ENCODE measurements at regions of chr17 and their contacts with region 1.

Region 1: DNA sequence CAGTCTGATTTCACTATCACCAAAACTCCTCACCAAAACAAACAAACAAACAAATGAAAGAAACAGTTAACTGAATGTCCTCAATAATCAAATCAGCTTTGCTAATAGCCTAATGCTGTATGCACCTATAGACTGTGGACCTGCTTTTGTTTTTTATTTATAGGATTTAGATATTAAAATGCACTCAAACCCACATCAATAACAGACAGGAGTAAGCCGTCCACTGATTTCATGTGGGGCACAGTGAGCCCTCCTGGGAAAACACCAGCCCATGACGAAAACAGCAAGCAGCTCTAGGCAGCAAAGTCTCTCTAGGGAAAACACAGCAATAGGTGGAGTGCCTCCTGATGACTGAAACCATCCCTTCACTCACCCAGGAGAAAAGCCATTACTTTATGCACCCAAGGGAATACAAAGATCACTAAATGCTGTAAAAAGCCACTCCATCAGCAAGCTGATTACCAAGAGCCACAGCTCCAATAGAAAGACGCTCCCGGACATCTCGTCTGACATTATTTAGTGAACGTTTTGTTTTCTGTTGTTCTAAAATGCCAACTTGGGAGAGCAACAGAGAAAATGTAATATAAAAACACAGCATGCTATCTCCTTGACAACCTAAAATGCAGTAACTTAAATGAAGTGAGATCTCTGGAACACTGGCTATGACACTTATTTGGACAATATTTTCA is 47.8 kb downstream of the ANKFY1 start:
- DNase-seq: no peak
- H3K4me3 ChIP-seq: no peak overlapping the region
- H3K27ac ChIP-seq: peak overlapping the region; percentile 8 to 95
- H3K4me1 ChIP-seq: peaks cover 2 to 4% of the 10 kb centered on the region in 2 donors
- H3K27me3 ChIP-seq: no peaks in the 10 kb centered on the region
- CTCF ChIP-seq: no peak
- POLR2A ChIP-seq: no peak

Region 2: DNA sequence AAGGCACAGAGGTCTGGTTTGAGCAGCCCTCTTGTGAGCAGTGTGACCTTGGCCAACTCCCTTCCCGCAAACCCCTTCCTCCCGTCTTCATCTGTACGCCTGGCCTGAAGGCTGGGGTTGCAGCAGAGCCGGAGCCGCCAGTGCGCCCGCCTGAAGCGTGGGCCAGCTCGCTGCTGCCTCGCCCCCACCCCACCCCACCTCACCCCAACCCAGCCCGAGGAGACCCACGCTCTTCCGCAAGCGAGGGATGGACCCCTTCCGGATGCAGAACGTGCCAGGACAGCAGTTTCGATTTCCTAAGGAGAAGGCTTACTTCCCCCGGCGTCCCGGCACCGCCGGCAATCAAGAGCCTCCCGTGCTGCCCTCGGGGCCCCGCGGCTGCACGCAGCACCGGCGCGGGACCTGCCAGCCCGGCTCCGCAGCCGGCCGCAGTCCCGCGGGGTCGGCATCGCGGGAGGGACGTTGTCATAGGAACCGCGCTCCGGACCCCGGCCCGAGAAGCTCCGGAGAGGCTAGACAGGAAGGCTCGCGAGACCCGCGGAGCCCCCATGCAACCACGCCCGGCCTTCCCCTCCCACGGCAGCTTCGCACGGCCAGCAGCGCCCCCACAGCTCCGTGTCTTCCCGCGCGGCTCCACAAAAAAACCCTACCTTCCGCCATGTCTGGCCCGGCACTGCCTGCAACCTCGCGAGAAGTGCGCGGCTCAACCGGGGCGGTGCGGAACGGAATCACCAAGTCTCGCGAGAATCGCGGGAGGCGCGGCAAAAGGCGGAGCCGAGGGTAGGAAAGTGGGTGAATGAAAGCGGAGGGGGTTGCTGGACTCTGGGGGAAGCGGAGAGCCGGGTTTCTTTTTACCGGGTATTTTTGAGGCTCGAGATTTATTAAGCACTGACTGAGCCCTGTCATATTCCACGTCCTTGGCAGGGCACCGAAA is 47.5 kb after region 1 on chr17 and contains the start of gene ANKFY1:
- intact Hi-C with region 1: loop called (anchors 10 kb)
- DNase-seq: peak; percentile 95 to 98
- H3K4me3 ChIP-seq: peak within 1 kb of the TSS; percentile 57 to 78
- H3K27ac ChIP-seq: peak within 1 kb of the TSS; percentile 74 to 87
- H3K4me1 ChIP-seq: peaks cover 0 to 8% of the 10 kb centered on the region in 2 donors
- H3K27me3 ChIP-seq: no peaks in the 10 kb centered on the region
- CTCF ChIP-seq: peak in 3 of 4 experiments; percentile 30 to 46 (median 37)
- POLR2A ChIP-seq: peak; percentile 55 to 68
- total RNA-seq, gene ANKFY1: 17.6 to 69.5 (median 52.8) TPM

Measured in uterus (tissue), 4 donors.